ENCODE measurements at regions of chr17 and their contacts with region 1.

Region 1: DNA sequence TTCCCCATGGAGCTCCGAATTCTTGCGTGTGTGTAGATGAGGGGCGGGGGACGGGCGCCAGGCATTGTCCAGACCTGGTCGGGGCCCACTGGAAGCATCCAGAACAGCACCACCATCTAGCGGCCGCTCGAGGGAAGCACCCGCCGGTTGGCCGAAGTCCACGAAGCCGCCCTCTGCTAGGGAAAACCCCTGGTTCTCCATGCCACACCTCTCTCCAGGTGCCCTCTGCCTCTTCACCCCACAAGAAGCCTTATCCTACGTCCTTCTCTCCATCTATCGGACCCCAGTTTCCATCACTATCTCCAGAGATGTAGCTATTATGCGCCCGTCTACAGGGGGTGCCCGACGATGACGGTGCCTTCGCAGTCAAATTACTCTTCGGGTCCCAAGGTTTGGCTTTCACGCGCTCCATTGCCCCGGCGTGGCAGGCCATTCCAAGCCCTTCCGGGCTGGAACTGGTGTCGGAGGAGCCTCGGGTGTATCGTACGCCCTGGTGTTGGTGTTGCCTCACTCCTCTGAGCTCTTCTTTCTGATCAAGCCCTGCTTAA is 617 bp upstream of the SENP3 start:
- DNase-seq: peak in 1 of 2 donors; percentile 92
- H3K4me3 ChIP-seq: peak overlapping the region; percentile 70 to 82
- H3K27ac ChIP-seq: peak overlapping the region; percentile 88
- H3K4me1 ChIP-seq: peaks cover 70% of the 10 kb centered on the region
- H3K27me3 ChIP-seq: no peaks in the 10 kb centered on the region
- CTCF ChIP-seq: peak; percentile 64 to 90 (median 89)
- POLR2A ChIP-seq: no peak

Region 2: DNA sequence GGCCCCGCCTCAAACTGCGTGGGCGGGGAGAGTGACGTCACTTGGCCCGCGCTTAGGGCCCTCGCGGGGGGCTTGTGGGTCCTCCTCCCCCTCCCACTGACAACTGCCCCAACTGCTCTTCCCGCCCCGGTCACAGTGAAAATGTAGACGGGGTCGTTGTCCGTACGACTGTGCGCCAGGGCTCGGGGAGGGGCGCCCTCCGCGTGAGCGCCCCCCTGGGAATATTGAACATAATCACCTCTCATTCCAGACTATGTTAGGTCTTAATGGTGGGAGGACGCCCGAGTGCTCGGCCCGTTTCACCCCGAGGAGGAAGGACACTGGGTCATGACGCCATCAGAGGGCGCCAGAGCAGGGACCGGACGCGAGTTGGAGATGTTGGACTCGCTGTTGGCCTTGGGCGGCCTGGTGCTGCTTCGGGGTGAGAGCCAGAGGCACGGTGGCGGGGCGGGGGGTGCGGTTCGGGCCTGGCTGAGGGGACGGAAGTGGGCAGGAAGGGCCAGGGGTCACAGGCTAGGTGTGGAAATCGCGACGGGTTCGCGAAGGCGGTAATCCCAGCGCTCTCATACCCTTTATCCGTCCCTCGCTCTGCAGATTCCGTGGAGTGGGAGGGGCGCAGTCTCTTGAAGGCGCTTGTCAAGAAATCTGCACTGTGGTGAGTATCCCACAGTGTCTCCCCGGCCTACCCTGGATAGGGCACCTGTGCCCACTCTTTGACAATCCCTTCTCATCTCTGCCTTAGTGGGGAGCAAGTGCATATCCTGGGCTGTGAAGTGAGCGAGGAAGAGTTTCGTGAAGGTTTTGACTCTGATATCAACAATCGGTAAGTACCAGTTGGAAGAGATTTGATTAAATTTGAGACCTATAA is 308.7 kb before region 1 on chr17 and contains the start of gene ELP5:
- intact Hi-C with region 1: loop called (anchors 10 kb)
- DNase-seq: peak in 1 of 2 donors; percentile 96
- H3K4me3 ChIP-seq: peak within 1 kb of the TSS; percentile 92 to 99
- H3K27ac ChIP-seq: peak within 1 kb of the TSS; percentile 99
- H3K4me1 ChIP-seq: peaks cover 50% of the 10 kb centered on the region
- H3K27me3 ChIP-seq: no peaks in the 10 kb centered on the region
- CTCF ChIP-seq: no peak
- POLR2A ChIP-seq: peak in 1 of 2 donors; percentile 40
- total RNA-seq, gene ELP5: 30.9 TPM

Region 3: GRCh38 chr17:7435221-7435675 is 125.9 kb before region 1 on chr17 and contains the start of gene TMEM102:
- intact Hi-C with region 1: loop called (anchors 5 kb)
- DNase-seq: peak in 1 of 2 donors; percentile 95
- H3K4me3 ChIP-seq: peak within 1 kb of the TSS; percentile 34 to 49
- H3K27ac ChIP-seq: peak within 1 kb of the TSS; percentile 81
- H3K4me1 ChIP-seq: peaks cover 48% of the 10 kb centered on the region
- H3K27me3 ChIP-seq: no peaks in the 10 kb centered on the region
- CTCF ChIP-seq: no peak
- POLR2A ChIP-seq: peak in 1 of 2 donors; percentile 20
- total RNA-seq, gene TMEM102: 9.8 TPM

Region 4: DNA sequence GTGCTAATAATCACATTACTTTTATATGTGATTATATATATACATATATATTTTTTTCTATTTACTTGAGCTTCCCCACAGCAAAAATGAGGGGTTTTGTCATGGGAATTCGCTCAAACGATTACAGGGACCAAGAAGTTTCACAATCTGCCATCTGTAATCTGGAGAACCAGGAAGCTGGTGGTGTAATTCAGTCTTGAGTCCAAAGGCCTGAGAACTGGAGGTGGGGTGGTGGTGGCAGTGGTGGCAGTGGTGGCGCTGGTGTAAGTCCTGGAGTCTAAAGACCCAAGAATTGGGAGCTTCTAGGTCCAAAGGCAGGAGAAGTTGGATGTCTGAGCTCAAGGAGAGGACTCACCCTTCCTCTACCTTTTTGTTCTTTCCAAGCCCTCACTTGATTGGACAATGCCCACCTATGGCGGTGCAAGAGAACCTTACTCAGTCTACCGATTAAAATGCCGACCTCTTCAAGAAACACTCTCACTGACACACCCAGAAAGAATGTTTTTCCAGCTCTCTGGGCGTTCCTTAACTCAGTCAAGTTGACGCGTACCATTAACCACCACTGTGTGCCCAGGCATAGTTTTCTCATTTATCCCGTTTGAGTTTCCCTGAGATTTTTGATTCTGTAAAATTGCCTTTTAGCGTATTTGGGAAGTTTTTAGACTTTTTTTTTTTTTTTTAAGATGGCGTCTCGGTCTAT is 45.0 kb before region 1 on chr17:
- intact Hi-C with region 1: loop called (anchors 5 kb)
- DNase-seq: no peak
- H3K4me3 ChIP-seq: no peak overlapping the region
- H3K27ac ChIP-seq: no peak overlapping the region
- H3K4me1 ChIP-seq: peaks cover 5% of the 10 kb centered on the region
- H3K27me3 ChIP-seq: no peaks in the 10 kb centered on the region
- CTCF ChIP-seq: no peak
- POLR2A ChIP-seq: no peak

Measured in vagina (tissue), 2 donors.